Heart right ventricle (tissue), 16 donors: ENCODE measurements at regions of chr16 and their contacts with region 1.

Region 1: GRCh38 chr16:69424053-69424934 is at the start of gene CYB5B:
- DNase-seq: peak; percentile 87 to 97
- ATAC-seq: peak; percentile 97 to 99 (median 99)
- H3K4me3 ChIP-seq: peak within 1 kb of the TSS; percentile 59 to 94 (median 75)
- H3K27ac ChIP-seq: peak within 1 kb of the TSS; percentile 26 to 93 (median 80)
- H3K4me1 ChIP-seq: peaks cover 0 to 23% (median 17%) of the 10 kb centered on the region in 9 donors
- H3K27me3 ChIP-seq: no peaks in the 10 kb centered on the region
- CTCF ChIP-seq: no peak
- total RNA-seq, gene CYB5B: 59.8 to 84.2 (median 72.5) TPM

Region 2: GRCh38 chr16:69404275-69404805 is 20.0 kb before region 1 on chr16:
- intact Hi-C with region 1: loop called in 1 of 10 experiments (anchors 1 kb)
- DNase-seq: peak in 1 of 2 donors; percentile 27
- ATAC-seq: peak; percentile 65 to 87 (median 80)
- H3K4me3 ChIP-seq: peak overlapping the region in 2 of 10 donors; percentile 8 to 25
- H3K27ac ChIP-seq: peak overlapping the region; percentile 38 to 81 (median 73)
- H3K4me1 ChIP-seq: peaks cover 5 to 50% (median 20%) of the 10 kb centered on the region in 9 donors
- H3K27me3 ChIP-seq: no peaks in the 10 kb centered on the region
- CTCF ChIP-seq: no peak

Region 3: GRCh38 chr16:69626256-69626655 is 202.0 kb after region 1 on chr16:
- intact Hi-C with region 1: loop called in 1 of 10 experiments (anchors 10 kb)
- DNase-seq: no peak
- ATAC-seq: no peak
- H3K4me3 ChIP-seq: no peak overlapping the region
- H3K27ac ChIP-seq: no peak overlapping the region
- H3K4me1 ChIP-seq: peaks cover 0 to 16% (median under 1%) of the 10 kb centered on the region in 9 donors
- H3K27me3 ChIP-seq: no peaks in the 10 kb centered on the region
- CTCF ChIP-seq: no peak